Dorsolateral prefrontal cortex (tissue), 120 donors: ENCODE measurements at regions of chr14 and their contacts with region 1.

Region 1: DNA sequence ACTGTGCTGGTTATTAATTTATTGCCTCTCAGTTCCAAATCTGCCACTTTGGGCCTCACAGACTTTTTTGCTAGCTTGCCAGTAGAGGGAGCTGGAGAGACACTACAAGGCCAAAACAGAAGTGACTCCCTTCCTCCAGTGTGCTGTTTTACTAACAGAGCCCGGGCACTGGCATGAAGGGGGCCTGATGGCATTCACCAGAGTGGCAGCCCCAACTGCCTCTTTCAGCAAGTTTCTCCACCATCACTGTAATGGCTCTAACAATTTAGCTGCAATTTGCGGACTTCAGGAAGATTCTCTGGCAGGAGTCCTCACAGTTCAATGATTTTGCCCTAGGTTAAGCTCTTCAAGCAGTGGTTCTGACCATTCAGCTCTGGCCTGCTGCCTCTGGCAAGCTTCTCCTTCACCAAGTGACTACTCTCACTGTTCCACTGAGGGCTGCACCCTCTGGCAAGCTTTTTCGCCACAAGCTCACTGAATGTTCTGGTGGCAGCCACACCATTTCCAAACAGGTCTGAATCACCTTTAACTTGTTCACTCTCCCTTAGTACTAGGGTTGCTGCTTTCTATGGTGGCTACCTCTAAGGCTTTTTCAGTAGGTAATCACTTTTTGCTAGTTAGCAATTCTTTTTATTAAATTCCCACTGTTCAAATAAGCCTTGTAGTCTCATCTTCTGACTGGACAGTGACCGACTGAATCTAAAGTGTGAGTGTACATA is 104.9 kb downstream of the ZC3H14 start:
- DNase-seq: peak in 7 of 10 donors; percentile 39 to 66 (median 46)
- H3K4me3 ChIP-seq: no peak overlapping the region
- H3K27ac ChIP-seq: peak overlapping the region in 34 of 59 donors; percentile 1 to 72 (median 31)
- H3K27me3 ChIP-seq: no peaks in the 10 kb centered on the region
- CTCF ChIP-seq: peak; percentile 57 to 90 (median 82)

Region 2: GRCh38 chr14:88792572-88793258 is 125.0 kb after region 1 on chr14 and contains the start of gene EML5:
- intact Hi-C with region 1: loop called in 1 of 2 experiments (anchors 10 kb)
- DNase-seq: peak; percentile 63 to 91 (median 82)
- H3K4me3 ChIP-seq: peak within 1 kb of the TSS; percentile 52 to 92 (median 82)
- H3K27ac ChIP-seq: peak within 1 kb of the TSS in 58 of 59 donors; percentile 37 to 94 (median 84)
- H3K27me3 ChIP-seq: no peaks in the 10 kb centered on the region
- CTCF ChIP-seq: peak in 36 of 56 donors; percentile 2 to 62 (median 32)
- total RNA-seq, gene EML5: 7.7 to 23.3 (median 14.2) TPM

Region 3: DNA sequence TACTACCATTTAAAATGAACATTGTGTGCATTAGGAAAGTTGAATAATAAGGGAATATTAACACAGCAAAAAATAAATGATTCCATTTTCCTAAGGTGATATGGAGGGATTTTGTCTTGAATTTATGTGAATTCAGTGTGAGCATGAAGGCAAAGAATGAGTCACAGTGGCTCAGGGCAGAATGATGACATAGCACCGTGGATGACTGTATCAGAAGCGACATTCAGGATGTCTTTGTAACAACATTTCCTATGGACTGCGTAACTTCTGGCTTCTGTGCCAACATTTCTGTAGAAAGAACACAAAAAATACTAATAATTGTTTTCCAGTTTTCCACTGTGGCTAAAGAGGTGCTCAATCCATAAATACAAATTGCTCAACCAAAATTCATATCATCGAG is 211.3 kb after region 1 on chr14:
- intact Hi-C with region 1: loop called in 1 of 2 experiments (anchors 10 kb)
- DNase-seq: no peak
- H3K4me3 ChIP-seq: no peak overlapping the region
- H3K27ac ChIP-seq: no peak overlapping the region
- H3K27me3 ChIP-seq: no peaks in the 10 kb centered on the region
- CTCF ChIP-seq: no peak

Region 4: DNA sequence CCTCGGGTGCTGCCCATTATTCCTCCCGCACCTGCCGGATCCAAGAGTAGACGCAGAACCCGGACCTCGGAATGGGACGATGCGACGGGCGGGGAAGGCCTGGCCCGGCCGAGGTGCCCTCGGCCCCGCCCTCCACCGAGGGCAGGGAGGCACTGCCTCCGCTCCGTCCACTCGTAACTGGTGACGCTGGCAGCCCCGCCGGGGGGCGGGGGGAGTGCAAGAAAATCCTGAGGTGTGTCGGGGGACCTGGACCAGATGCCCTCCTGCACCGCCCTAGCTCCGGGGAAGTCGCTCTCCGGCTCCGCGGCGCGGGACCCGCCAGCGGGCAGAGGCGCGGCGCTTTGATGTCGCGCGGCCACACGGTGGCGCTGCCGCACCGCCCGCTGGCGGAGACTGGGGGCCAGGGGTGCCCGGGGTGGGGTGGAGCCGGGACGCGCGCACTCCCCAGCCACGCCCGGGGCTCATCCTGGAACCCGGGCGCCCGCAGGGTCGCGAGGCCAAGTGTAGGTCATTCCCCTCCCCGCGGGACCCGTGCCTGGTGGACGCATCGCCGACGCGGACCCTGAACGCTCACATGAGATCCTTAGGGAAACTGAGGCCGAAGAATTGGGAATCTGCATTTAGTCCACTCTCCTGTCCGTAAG is 359.5 kb after region 1 on chr14:
- intact Hi-C with region 1: loop called in 1 of 2 experiments (anchors 10 kb)
- DNase-seq: peak in 5 of 10 donors; percentile 29 to 76 (median 52)
- H3K4me3 ChIP-seq: peak overlapping the region; percentile 40 to 85 (median 68)
- H3K27ac ChIP-seq: peak overlapping the region in 3 of 59 donors; percentile 5 to 46 (median 38)
- H3K27me3 ChIP-seq: peaks cover 0 to 2% (median 0%) of the 10 kb centered on the region in 45 donors
- CTCF ChIP-seq: peak; percentile 35 to 96 (median 74)